ENCODE measurements at regions of chr2 and their contacts with region 1.

Region 1: DNA sequence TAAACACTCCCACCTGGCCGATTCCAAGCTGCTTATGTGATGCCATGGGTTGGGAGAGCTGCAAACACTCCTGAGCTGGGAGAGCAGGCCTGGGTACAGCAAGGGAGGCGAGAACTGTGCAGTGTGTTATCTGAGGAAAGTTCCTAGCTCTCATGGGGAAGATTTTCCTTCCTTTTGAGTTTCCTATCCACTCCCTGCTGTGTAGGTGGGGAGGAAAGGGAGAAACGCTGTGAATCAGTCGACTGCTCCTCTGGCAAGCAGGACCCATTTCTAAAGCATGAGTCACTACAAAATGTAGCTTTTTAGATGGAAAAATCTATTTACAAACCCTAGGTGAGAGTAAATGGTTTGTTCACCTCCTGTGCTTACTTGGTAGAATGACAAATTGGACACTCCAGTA is 80.4 kb downstream of the SH3RF3 start:
- DNase-seq: no peak
- H3K4me3 ChIP-seq: no peak overlapping the region
- H3K27ac ChIP-seq: no peak overlapping the region
- H3K4me1 ChIP-seq: no peaks in the 10 kb centered on the region; a peak in 1 of 7 replicates
- H3K27me3 ChIP-seq: no peaks in the 10 kb centered on the region; a peak in 1 of 7 replicates
- CTCF ChIP-seq: no peak
- EP300 ChIP-seq: no peak
- POLR2A ChIP-seq: no peak
- RAD21 ChIP-seq: no peak

Region 2: GRCh38 chr2:109195193-109196045 is 14.0 kb before region 1 on chr2:
- CTCF ChIA-PET with region 1: interaction called, 19 read pairs
- POLR2A ChIA-PET with region 1: interaction called, 3 read pairs
- DNase-seq: no peak
- H3K4me3 ChIP-seq: no peak overlapping the region
- H3K27ac ChIP-seq: no peak overlapping the region
- H3K4me1 ChIP-seq: peaks cover 0 to 4% (median 1%) of the 10 kb centered on the region in 4 experiments; a peak in 2 of 7 replicates
- H3K27me3 ChIP-seq: peaks cover 0 to 2% (median 0%) of the 10 kb centered on the region in 4 experiments; a peak in 2 of 7 replicates
- CTCF ChIP-seq: no peak
- EP300 ChIP-seq: no peak
- POLR2A ChIP-seq: no peak
- RAD21 ChIP-seq: no peak

Region 3: DNA sequence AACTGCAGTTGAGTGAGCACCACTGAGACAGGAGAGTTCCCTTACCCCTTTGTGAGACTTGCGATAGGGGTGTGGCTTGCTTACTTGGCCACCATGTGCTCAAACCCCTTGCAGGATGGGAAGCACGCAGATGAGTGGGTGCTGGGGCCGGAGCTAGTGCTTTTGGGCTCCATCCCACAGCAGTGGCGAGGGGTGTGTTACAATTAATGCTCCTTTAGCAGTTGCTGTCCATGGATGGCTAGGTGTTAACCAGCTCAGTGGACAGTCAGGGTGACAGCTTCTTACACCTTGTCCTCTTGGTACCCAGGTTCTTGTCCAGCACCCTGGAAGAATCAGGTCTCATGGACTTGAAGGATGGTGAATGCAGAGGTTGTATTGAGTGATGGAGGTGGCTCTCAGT is 23.5 kb after region 1 on chr2:
- CTCF ChIA-PET with region 1: no interaction called
- POLR2A ChIA-PET with region 1: no interaction called
- DNase-seq: no peak
- H3K4me3 ChIP-seq: no peak overlapping the region
- H3K27ac ChIP-seq: no peak overlapping the region
- H3K4me1 ChIP-seq: peaks cover 0 to 4% (median 2%) of the 10 kb centered on the region in 4 experiments; a peak in 3 of 7 replicates
- H3K27me3 ChIP-seq: no peaks in the 10 kb centered on the region
- CTCF ChIP-seq: no peak
- EP300 ChIP-seq: no peak
- POLR2A ChIP-seq: no peak
- RAD21 ChIP-seq: no peak

Measured in H1 (cell line).